ENCODE measurements at regions of chr5 and their contacts with region 1.

Region 1: GRCh38 chr5:15821506-15821905 is 321.5 kb downstream of the FBXL7 start:
- DNase-seq: no peak
- ATAC-seq: no peak
- H3K4me3 ChIP-seq: no peak overlapping the region
- H3K27ac ChIP-seq: no peak overlapping the region
- H3K4me1 ChIP-seq: peaks cover 0 to 16% (median 6%) of the 10 kb centered on the region in 9 donors
- H3K27me3 ChIP-seq: no peaks in the 10 kb centered on the region
- CTCF ChIP-seq: no peak

Region 2: GRCh38 chr5:15105796-15106393 is 715.6 kb before region 1 on chr5:
- intact Hi-C with region 1: loop called in 3 of 10 experiments (anchors 5 to 10 kb)
- DNase-seq: peak in 1 of 2 donors; percentile 45
- ATAC-seq: peak in 5 of 8 donors; percentile 52 to 70 (median 61)
- H3K4me3 ChIP-seq: no peak overlapping the region
- H3K27ac ChIP-seq: no peak overlapping the region
- H3K4me1 ChIP-seq: no peaks in the 10 kb centered on the region
- H3K27me3 ChIP-seq: no peaks in the 10 kb centered on the region
- CTCF ChIP-seq: peak; percentile 45 to 84 (median 75)

Region 3: DNA sequence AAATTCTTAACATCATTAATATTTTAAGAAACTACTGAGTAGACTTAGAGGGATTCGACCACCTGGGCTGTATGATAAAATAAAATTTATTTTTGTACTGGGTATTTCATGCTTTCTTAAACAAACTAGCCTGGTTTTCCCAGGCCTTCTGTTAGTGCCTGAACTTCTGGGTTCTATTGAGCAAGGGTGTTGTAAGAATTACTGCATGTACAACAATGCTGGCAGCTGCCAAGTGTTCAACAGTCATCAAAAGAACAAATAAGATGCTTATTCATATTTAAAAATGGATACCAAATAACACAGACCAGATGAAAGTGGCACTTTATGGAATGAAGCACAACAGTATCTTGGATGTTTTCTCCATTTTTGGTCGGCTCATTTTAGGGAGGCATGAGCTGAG is 444.7 kb before region 1 on chr5:
- intact Hi-C with region 1: loop called in 2 of 10 experiments (anchors 10 kb)
- DNase-seq: no peak
- ATAC-seq: peak in 1 of 8 donors; percentile 44
- H3K4me3 ChIP-seq: no peak overlapping the region
- H3K27ac ChIP-seq: no peak overlapping the region
- H3K4me1 ChIP-seq: no peaks in the 10 kb centered on the region
- H3K27me3 ChIP-seq: no peaks in the 10 kb centered on the region
- CTCF ChIP-seq: no peak

Region 4: DNA sequence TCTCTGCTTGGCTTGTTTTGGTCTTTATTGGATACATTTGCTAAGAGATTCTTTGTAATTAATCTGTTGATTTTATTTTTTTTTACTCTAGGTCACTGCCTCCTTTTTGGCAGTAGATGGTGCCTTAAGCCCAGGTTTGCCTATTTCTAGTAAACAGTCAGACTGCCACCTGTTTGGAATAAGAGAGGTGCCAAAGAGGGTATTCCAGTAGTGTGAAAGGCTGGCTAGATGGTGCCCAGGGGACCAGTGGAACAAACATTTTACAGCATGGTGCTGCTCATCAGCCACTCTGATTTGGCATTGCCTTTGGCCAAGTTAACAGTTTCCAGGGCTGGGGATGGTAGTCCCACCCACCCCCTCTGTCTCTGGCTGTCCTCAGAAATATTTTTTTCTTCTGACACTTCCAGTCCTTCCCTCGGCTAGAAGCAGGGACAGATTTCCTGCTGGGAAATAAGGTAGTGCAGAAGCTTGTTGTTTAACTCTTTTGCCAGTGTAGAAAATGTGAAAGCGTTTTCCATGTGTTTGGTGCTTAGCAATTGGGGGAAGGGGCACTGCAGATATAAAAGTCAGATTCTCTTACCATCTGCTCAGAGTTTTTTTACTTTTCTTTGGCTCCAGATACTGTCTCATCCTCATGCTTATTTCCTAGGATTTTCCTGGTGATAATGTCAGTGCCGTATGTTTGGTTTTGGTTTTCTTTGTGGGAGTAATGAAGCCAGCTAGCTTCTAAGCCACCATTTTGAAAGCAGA is 358.1 kb before region 1 on chr5:
- intact Hi-C with region 1: loop called in 2 of 10 experiments (anchors 5 kb)
- DNase-seq: no peak
- ATAC-seq: peak in 2 of 8 donors; percentile 33 to 42
- H3K4me3 ChIP-seq: no peak overlapping the region
- H3K27ac ChIP-seq: no peak overlapping the region
- H3K4me1 ChIP-seq: no peaks in the 10 kb centered on the region
- H3K27me3 ChIP-seq: no peaks in the 10 kb centered on the region
- CTCF ChIP-seq: peak in 8 of 9 donors; percentile 41 to 68 (median 52)

Region 5: DNA sequence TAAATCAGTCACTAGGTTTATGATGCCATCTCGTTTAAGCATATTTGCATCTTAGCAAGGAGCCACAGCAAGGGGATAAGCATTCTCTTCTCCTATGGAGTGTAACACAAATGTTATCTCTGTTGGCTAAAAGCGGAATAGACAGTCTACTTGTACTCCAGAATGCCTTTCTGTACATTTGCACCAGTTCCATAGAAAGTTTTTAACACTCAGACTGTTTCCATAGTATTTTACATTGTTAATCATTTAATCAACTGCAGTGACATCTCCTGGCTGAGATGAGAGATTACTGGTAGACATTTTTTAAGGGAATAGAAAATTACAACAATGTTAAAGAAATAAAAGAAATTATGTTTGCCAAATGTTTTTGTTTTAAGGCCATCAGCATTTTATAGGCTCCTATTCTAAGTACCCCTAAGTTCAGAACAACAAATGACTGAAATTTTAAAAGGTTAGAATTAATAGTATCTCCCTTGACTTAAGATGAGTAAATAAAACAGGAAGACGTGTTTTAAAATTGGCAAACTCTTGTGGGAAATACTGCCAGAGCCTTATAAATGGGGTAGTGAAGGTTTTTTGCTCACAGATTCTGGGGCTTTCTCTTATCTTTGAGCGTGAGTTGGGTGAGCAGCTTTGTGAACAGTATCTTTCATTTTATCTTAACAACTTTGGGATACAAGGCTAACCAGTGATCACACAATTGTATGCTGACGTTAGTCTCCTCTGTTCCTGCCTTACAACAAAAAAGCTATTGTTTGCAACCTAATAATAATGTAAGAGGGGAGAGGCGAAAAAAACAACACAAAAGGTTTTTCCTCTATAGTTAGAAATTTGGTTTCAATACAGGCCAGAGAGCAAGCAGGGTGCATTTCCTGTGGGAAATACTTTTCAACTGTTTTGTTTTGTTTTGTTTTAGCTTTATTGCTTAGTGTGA is 27.2 kb before region 1 on chr5:
- intact Hi-C with region 1: loop called in 1 of 10 experiments (anchors 2 kb)
- DNase-seq: no peak
- ATAC-seq: peak in 5 of 8 donors; percentile 25 to 73 (median 67)
- H3K4me3 ChIP-seq: no peak overlapping the region
- H3K27ac ChIP-seq: peak overlapping the region in 9 of 10 donors; percentile 15 to 69 (median 49)
- H3K4me1 ChIP-seq: peaks cover 5 to 90% (median 73%) of the 10 kb centered on the region in 9 donors
- H3K27me3 ChIP-seq: no peaks in the 10 kb centered on the region
- CTCF ChIP-seq: peak in 7 of 9 donors; percentile 27 to 60 (median 43)

Region 6: GRCh38 chr5:15807871-15808270 is 13.6 kb before region 1 on chr5:
- intact Hi-C with region 1: no loop called
- DNase-seq: peak in 1 of 2 donors; percentile 64
- ATAC-seq: peak; percentile 87 to 97 (median 91)
- H3K4me3 ChIP-seq: no peak overlapping the region
- H3K27ac ChIP-seq: peak overlapping the region in 8 of 10 donors; percentile 2 to 68 (median 54)
- H3K4me1 ChIP-seq: peaks cover 0 to 34% (median 23%) of the 10 kb centered on the region in 9 donors
- H3K27me3 ChIP-seq: no peaks in the 10 kb centered on the region
- CTCF ChIP-seq: peak in 6 of 9 donors; percentile 28 to 61 (median 44)

Region 7: DNA sequence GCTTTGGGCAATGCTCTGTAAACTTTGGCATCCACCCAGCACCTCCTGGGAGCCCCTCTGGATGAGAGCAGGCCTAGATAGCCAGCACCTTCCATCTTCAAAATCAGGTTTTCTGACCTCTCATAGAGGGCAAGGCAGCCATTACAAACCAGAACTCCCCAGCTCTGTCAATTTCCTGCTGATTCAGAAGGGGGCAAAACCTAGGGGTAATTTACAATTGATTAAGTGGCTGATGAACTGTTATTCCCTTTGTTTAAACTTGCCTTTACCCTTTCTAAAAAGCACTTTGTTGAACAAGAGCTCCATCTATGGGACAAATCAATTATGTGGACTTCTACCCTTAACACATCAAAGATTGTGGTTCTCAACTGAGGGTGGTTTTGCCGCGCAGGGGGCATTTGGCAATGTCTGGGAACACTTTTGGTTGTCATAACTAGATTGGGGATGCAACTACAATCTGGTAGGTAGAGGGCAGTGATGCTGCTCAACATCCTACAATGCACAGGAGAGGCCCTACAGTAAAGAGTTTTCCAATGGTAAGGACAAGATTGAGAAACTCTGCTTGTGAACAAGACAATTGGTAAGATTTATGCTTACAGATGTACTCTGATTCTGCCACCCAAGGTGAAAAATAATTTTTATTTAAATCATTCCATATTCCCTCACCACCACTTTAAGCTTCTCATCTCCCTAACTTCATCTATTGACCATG is 174.0 kb after region 1 on chr5:
- intact Hi-C with region 1: loop called in 6 of 10 experiments (anchors 10 kb)
- DNase-seq: no peak
- ATAC-seq: peak; percentile 25 to 79 (median 60)
- H3K4me3 ChIP-seq: no peak overlapping the region
- H3K27ac ChIP-seq: no peak overlapping the region
- H3K4me1 ChIP-seq: peaks cover 0 to 10% (median 0%) of the 10 kb centered on the region in 9 donors
- H3K27me3 ChIP-seq: no peaks in the 10 kb centered on the region
- CTCF ChIP-seq: peak; percentile 35 to 77 (median 67)